ENCODE measurements at regions of chr2 and their contacts with region 1.

Region 1: DNA sequence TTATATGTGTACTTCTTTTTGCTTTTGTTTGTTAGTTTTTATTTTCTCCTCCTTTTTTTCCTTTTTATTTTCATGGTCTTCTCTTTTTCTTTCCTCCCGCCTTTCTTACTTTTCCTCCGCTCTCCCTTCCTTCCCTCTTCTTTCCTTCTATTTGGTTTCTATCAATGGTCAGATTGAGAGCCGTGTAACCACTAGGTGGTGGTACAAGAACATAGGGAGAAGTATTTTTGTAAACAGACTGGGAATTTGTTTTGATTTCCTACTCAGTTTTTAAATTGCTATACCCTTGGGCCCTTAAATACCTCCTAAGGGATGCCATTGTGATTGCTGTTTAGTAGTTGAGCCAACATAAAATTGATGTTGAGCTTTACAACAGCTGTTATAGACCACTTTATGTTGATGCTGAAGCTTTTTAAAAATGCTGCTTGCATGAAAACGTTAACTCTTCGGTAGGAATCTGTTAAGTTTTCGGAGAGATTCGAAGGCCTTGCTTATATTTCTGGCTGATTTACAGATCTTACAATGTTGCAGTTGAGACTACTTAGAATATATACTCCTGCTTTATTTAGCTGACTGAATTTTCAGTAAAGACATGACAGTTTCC is 124.2 kb downstream of the UBE2E3 start:
- DNase-seq: peak; percentile 48
- H3K4me3 ChIP-seq: no peak overlapping the region
- H3K27ac ChIP-seq: no peak overlapping the region
- H3K4me1 ChIP-seq: peaks cover 17% of the 10 kb centered on the region
- H3K27me3 ChIP-seq: no peaks in the 10 kb centered on the region
- CTCF ChIP-seq: peak; percentile 68 to 82

Region 2: GRCh38 chr2:181289698-181290097 is 185.1 kb after region 1 on chr2:
- CTCF ChIA-PET with region 1: no interaction called
- dilution Hi-C with region 1: no loop called
- in situ Hi-C with region 1: no loop called
- intact Hi-C with region 1: loop called (anchors 10 kb)
- DNase-seq: no peak
- H3K4me3 ChIP-seq: no peak overlapping the region
- H3K27ac ChIP-seq: no peak overlapping the region
- H3K4me1 ChIP-seq: no peaks in the 10 kb centered on the region
- H3K27me3 ChIP-seq: no peaks in the 10 kb centered on the region
- CTCF ChIP-seq: no peak

Region 3: DNA sequence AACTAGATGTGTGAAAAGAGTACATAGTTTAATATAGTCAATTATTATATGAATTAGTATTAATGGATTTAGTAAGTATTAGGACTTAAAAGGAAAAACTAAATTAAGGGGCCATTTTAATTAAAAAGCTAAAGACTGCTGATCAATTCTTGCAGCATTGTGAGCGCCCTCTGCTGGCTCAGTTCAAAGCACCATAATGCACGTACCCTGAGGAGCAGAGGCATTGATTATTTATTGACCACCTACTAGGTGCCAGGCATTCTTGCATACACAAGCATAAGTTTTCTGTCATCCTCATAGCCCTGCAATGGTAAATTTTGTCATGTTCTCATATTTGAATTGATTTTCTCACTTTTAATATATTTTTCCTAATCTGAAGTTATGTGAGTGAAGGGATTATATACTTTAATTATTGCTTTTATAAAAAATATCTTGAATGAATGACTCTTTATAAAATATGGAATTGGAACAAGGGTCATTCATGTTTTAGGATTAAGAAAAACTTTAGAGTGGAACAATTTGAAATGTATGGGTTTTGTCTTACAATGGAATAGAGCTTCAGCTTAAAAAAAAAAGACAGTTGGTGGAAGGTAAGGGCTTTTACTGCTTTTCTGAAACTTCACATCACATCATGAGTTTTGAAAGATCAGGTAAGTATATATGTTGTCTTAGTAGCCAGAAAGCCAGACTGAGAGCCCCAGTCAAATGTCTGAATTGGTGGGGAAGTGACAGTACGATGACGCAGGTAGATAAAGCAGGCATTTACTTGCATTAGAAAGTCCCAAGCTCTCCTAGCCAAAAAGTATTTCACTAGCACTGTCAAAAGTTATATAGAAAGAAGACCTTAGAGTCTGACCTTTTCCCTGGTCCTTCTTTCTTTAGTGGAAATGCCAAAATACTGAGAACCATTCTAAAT is 362.3 kb after region 1 on chr2:
- CTCF ChIA-PET with region 1: interaction called, 3 read pairs
- dilution Hi-C with region 1: loop called (anchors 25 kb)
- in situ Hi-C with region 1: loop called (anchors 10 to 25 kb)
- intact Hi-C with region 1: loop called (anchors 1 kb)
- DNase-seq: peak; percentile 25
- H3K4me3 ChIP-seq: no peak overlapping the region
- H3K27ac ChIP-seq: peak overlapping the region; percentile 66
- H3K4me1 ChIP-seq: peaks cover 10% of the 10 kb centered on the region
- H3K27me3 ChIP-seq: no peaks in the 10 kb centered on the region
- CTCF ChIP-seq: peak; percentile 84 to 85

Region 4: DNA sequence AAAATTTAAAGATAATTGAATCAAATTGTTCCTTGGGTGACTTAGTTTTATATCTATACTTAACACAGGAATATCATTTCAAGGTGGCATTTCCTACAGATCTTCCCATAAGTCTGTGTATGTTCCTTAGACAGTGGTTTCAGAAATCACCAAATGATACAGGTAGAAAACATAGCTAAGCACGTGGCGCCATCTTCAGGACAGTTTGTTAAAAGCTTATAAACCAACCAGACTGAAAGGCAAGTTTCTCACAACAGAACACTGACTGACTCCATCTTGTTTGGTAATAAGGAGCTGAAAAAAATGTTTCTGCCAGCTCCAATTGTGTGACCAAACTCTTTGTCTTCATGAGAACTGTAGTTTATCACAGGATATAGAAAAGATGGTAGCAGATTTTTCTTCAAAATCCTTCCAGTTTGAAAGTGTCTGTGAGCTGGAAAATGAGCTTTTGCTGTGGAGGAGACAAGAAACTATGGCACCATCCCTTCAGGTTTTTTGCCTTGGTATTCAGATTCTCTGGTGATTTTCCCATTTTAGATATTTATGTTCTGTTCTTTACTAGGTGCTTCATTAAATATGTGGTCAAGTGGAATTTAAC is 610.5 kb after region 1 on chr2:
- CTCF ChIA-PET with region 1: interaction called, 4 read pairs
- dilution Hi-C with region 1: no loop called
- in situ Hi-C with region 1: loop called (anchors 25 kb)
- intact Hi-C with region 1: loop called (anchors 1 kb)
- DNase-seq: peak; percentile 63
- H3K4me3 ChIP-seq: no peak overlapping the region
- H3K27ac ChIP-seq: no peak overlapping the region
- H3K4me1 ChIP-seq: no peaks in the 10 kb centered on the region
- H3K27me3 ChIP-seq: peaks cover 2% of the 10 kb centered on the region
- CTCF ChIP-seq: peak; percentile 66 to 69

Region 5: DNA sequence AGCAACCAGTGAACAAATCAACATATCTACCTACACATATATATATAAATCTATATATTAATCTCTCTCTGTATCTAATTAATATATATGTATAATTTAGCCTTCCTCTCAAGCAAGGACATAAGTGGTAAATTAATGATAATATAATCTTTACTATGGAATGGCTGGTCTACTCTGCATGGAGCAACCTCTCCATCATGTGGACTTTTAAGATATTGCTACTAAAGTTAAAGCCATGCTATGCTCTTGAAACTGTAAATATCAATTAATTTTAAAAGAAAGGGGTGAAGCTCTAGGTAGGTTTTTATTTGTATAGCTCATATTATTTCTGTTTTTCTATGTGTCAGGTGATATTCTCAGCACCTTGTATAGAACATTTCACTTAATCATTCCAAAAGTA is 1028.0 kb after region 1 on chr2:
- CTCF ChIA-PET with region 1: no interaction called
- dilution Hi-C with region 1: no loop called
- in situ Hi-C with region 1: no loop called
- intact Hi-C with region 1: loop called (anchors 10 kb)
- DNase-seq: no peak
- H3K4me3 ChIP-seq: no peak overlapping the region
- H3K27ac ChIP-seq: no peak overlapping the region
- H3K4me1 ChIP-seq: peaks cover 7% of the 10 kb centered on the region
- H3K27me3 ChIP-seq: peaks cover 2% of the 10 kb centered on the region
- CTCF ChIP-seq: peak; percentile 13 to 36

Measured in mammary epithelial cell (primary cell).